Caco-2 (cell line): ENCODE measurements at regions of chr9 and their contacts with region 1.

Region 1: GRCh38 chr9:5799314-5799713 is 33.6 kb downstream of the ERMP1 start:
- DNase-seq: peak in 1 of 2 experiments; percentile 33
- H3K4me3 ChIP-seq: no peak overlapping the region
- H3K4me3 Mint-ChIP-seq: no peak overlapping the region
- H3K27ac Mint-ChIP-seq: no peak overlapping the region
- H3K4me1 ChIP-seq: peaks cover 22% of the 10 kb centered on the region
- H3K4me1 Mint-ChIP-seq: peaks cover 9% of the 10 kb centered on the region
- H3K27me3 ChIP-seq: no peaks in the 10 kb centered on the region
- H3K27me3 Mint-ChIP-seq: no peaks in the 10 kb centered on the region
- CTCF ChIP-seq: peak; percentile 53 to 70

Region 2: GRCh38 chr9:4979239-4979638 is 820.1 kb before region 1 on chr9:
- CTCF ChIA-PET with region 1: no interaction called
- POLR2A ChIA-PET with region 1: no interaction called
- intact Hi-C with region 1: no loop called
- DNase-seq: no peak
- H3K4me3 ChIP-seq: no peak overlapping the region
- H3K4me3 Mint-ChIP-seq: no peak overlapping the region
- H3K27ac Mint-ChIP-seq: no peak overlapping the region
- H3K4me1 ChIP-seq: peaks cover 3% of the 10 kb centered on the region; the same call in 1 of the 2 replicates
- H3K4me1 Mint-ChIP-seq: peaks cover 8% of the 10 kb centered on the region
- H3K27me3 ChIP-seq: no peaks in the 10 kb centered on the region
- H3K27me3 Mint-ChIP-seq: peaks cover 5% of the 10 kb centered on the region
- CTCF ChIP-seq: no peak

Region 3: DNA sequence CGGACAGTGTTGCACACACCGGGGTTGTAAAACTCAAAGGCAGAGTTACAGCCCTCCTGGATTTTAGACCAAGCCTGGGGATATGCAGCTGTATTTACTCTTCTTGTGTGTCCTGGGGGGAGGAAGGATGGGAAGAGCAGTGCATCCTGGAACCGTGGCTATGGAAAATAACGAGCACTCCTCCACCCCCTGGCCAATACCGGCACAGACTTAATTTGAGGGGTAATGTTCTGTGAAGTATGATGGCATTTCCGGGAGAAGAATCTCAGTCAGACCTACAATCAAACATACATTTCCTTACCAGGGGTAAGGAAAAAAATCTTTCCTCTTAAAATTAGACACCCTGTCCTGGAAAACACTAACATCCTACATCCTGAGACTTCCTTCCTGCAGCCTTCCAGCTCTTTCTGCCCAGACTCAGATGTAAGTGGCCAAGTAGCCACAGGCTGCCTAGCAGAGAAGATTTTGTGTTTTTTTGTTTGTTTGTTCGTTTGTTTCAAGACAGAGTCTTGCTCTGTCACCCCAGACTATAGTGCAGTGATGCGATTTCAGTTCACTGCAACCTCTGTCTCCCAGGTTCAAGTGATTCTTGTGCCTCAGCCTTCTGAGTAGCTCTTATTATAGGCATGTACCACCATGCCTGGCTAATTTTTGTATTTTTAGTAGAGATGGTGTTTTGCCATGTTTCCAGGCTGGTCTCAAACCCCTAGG is 44.6 kb after region 1 on chr9:
- CTCF ChIA-PET with region 1: interaction called, 5 read pairs
- POLR2A ChIA-PET with region 1: no interaction called
- intact Hi-C with region 1: loop called (anchors 1 kb)
- DNase-seq: peak; percentile 66 to 67
- H3K4me3 ChIP-seq: no peak overlapping the region
- H3K4me3 Mint-ChIP-seq: peak overlapping the region; percentile 62
- H3K27ac Mint-ChIP-seq: peak overlapping the region; percentile 84
- H3K4me1 ChIP-seq: peaks cover 30% of the 10 kb centered on the region
- H3K4me1 Mint-ChIP-seq: peaks cover 12% of the 10 kb centered on the region
- H3K27me3 ChIP-seq: no peaks in the 10 kb centered on the region
- H3K27me3 Mint-ChIP-seq: no peaks in the 10 kb centered on the region
- CTCF ChIP-seq: no peak